Heart right ventricle (tissue), 16 donors: ENCODE measurements at regions of chr10 and their contacts with region 1.

Region 1: GRCh38 chr10:73625884-73626752 is 15.2 kb downstream of the MYOZ1 start:
- DNase-seq: peak; percentile 88 to 94
- ATAC-seq: peak; percentile 97 to 99 (median 99)
- H3K4me3 ChIP-seq: peak overlapping the region; percentile 64 to 93 (median 88)
- H3K27ac ChIP-seq: peak overlapping the region; percentile 5 to 90 (median 82)
- H3K4me1 ChIP-seq: peaks cover 0 to 15% (median 9%) of the 10 kb centered on the region in 9 donors
- H3K27me3 ChIP-seq: no peaks in the 10 kb centered on the region
- CTCF ChIP-seq: no peak

Region 2: DNA sequence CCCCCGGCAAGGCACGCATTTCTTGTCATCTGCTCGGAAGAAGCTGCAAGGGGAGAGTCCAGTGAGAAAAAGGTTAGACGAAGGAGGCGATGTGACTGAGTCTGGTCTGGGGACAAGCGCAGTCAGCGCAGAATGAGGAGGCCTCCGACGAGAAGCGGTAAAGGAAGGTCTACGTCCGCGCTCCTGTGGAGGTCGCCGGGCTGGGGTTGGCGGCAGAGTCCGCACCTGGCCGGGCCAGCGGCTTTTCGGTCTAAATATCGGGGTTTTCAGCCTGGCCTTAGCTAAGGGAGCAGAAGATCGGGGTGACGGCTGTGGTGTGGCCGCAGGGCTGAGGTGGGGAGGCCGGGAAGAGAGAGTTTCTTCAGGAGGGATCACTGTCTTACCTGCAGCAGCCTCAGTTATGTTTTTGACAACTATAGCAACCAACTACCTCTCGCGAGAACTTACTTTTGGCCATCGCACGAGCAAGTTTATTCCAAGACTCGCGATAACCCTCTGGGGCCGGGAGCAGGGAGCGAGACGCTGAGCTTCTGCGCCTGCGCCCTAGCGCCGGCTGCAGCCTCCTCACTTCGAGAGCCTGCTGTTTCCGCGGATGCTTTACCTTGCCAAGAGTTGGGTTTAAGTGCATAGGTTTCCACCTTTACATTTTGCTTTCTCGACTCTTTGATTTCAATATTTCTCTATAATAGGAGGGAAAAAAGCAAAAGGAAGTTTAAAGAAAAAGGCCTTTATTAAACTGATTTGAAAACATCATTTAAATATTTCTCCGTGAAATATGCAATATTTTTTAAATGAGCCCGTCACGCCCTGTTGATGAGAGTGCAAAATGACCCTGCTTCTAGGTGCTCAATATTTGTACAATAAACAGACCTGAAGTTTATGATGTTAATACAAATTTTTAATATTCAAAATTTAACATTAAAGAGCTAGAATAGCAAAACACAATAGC is 267.5 kb before region 1 on chr10 and contains the start of gene CFAP70:
- intact Hi-C with region 1: no loop called
- DNase-seq: peak; percentile 90 to 93
- ATAC-seq: peak; percentile 93 to 98 (median 97)
- H3K4me3 ChIP-seq: peak within 1 kb of the TSS; percentile 62 to 84 (median 76)
- H3K27ac ChIP-seq: peak within 1 kb of the TSS; percentile 15 to 81 (median 62)
- H3K4me1 ChIP-seq: peaks cover 0 to 18% (median 11%) of the 10 kb centered on the region in 9 donors
- H3K27me3 ChIP-seq: no peaks in the 10 kb centered on the region
- CTCF ChIP-seq: no peak
- total RNA-seq, gene CFAP70: 0.87 to 3.9 (median 1.9) TPM

Region 3: DNA sequence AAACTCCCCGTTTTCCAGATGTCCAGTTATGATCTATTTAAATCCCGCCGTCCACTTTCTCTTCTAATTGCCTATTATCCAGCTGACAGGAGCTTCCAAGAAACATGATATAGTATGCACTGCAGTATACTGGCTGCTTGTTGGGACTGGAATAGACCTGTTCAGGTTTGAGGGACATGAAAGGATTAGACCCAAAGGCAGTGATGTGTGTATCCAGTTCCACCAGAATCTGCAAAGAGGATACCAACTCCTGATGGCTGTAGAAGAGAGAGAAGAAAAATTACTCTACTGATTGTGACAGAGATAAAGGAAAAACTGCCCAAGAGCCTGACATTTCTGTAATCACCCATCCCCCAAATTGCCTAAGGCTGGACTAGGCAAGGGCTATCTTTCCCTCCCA is 201.6 kb before region 1 on chr10:
- intact Hi-C with region 1: no loop called
- DNase-seq: no peak
- ATAC-seq: no peak
- H3K4me3 ChIP-seq: no peak overlapping the region
- H3K27ac ChIP-seq: no peak overlapping the region
- H3K4me1 ChIP-seq: no peaks in the 10 kb centered on the region
- H3K27me3 ChIP-seq: no peaks in the 10 kb centered on the region
- CTCF ChIP-seq: no peak

Region 4: GRCh38 chr10:73534857-73535256 is 91.3 kb before region 1 on chr10:
- intact Hi-C with region 1: loop called in 1 of 10 experiments (anchors 5 kb)
- DNase-seq: no peak
- ATAC-seq: no peak
- H3K4me3 ChIP-seq: no peak overlapping the region
- H3K27ac ChIP-seq: no peak overlapping the region
- H3K4me1 ChIP-seq: no peaks in the 10 kb centered on the region
- H3K27me3 ChIP-seq: no peaks in the 10 kb centered on the region
- CTCF ChIP-seq: no peak

Region 5: GRCh38 chr10:73576178-73576889 is 49.8 kb before region 1 on chr10:
- intact Hi-C with region 1: loop called in 3 of 10 experiments (anchors 2 to 5 kb)
- DNase-seq: peak in 1 of 2 donors; percentile 31
- ATAC-seq: peak; percentile 68 to 87 (median 81)
- H3K4me3 ChIP-seq: peak overlapping the region in 8 of 10 donors; percentile 4 to 37 (median 20)
- H3K27ac ChIP-seq: peak overlapping the region; percentile 17 to 91 (median 79)
- H3K4me1 ChIP-seq: peaks cover 5 to 37% (median 29%) of the 10 kb centered on the region in 9 donors
- H3K27me3 ChIP-seq: no peaks in the 10 kb centered on the region
- CTCF ChIP-seq: no peak

Region 6: DNA sequence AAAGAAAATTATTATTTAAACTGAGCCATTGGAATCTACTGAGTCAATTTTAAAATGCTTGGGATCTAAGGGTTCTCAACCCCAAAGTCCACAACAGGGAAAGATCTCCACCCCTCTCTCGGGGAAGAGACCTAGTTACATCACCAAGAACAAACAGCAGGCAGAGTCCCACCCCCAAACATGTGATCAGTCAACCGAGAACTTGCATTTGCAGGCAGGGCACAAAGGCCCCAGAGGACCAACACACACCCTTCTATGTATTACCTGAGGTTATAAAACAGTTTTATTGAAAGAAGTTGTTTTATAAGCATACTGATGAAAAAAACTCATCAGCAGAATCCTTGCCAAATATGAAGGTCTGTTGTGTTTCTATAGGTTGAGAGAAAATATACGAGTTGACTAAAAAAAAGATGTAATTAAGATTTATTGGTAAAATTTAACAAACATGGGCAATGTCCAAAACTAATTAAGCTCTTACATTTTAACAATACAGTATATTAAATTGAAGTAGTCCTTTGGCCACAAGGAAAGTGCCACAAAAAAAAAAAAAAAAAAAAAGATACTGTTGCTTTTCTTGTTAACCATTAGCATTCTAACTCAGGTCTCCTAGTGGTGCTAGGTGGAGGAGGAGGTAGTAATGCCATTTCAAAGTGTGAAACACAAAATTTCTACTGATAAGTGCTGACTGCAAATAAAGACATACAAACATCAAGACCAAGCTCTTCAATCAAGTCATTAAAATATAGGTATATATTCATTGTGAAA is 34.0 kb before region 1 on chr10:
- intact Hi-C with region 1: loop called in 2 of 10 experiments (anchors 5 kb)
- DNase-seq: peak in 1 of 2 donors; percentile 67
- ATAC-seq: peak; percentile 75 to 91 (median 83)
- H3K4me3 ChIP-seq: peak overlapping the region in 6 of 10 donors; percentile 11 to 31 (median 18)
- H3K27ac ChIP-seq: peak overlapping the region; percentile 3 to 78 (median 74)
- H3K4me1 ChIP-seq: peaks cover 0 to 41% (median 33%) of the 10 kb centered on the region in 9 donors
- H3K27me3 ChIP-seq: no peaks in the 10 kb centered on the region
- CTCF ChIP-seq: no peak

Region 7: DNA sequence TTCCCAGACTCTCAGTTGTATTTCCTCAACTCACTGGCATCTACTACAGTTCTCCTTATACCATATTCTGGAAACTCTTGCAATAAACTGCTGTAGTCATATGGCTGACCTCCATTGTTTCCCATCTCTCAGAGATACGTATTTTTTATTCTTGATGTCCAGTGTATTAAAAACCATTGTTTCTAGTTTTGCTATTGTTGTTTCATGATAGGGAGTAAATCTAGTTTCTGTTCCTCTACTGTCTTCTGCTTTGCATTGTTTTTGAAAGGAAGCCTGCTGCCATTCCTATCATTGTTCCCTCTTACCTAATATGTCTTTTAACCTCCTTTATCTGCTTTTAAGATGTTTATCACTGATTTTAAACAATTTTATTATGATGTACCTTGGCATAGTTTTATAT is 779.9 kb after region 1 on chr10:
- intact Hi-C with region 1: no loop called
- DNase-seq: no peak
- ATAC-seq: no peak
- H3K4me3 ChIP-seq: no peak overlapping the region
- H3K27ac ChIP-seq: no peak overlapping the region
- H3K4me1 ChIP-seq: no peaks in the 10 kb centered on the region
- H3K27me3 ChIP-seq: no peaks in the 10 kb centered on the region
- CTCF ChIP-seq: no peak